AG04450 (cell line): ENCODE measurements at regions of chr4 and their contacts with region 1.

Region 1: GRCh38 chr4:40536032-40536431 is 93.6 kb downstream of the RBM47 start:
- DNase-seq: no peak
- H3K4me3 ChIP-seq: no peak overlapping the region
- H3K27ac ChIP-seq: no peak overlapping the region
- H3K27me3 ChIP-seq: no peaks in the 10 kb centered on the region
- CTCF ChIP-seq: no peak

Region 2: GRCh38 chr4:40003986-40004385 is 532.0 kb before region 1 on chr4:
- CTCF ChIA-PET with region 1: no interaction called
- POLR2A ChIA-PET with region 1: interaction called, 13 read pairs
- DNase-seq: peak; percentile 16
- H3K4me3 ChIP-seq: no peak overlapping the region
- H3K27ac ChIP-seq: no peak overlapping the region
- H3K27me3 ChIP-seq: no peaks in the 10 kb centered on the region
- CTCF ChIP-seq: no peak

Region 3: GRCh38 chr4:40340030-40340429 is 196.0 kb before region 1 on chr4:
- CTCF ChIA-PET with region 1: interaction called, 10 read pairs
- POLR2A ChIA-PET with region 1: no interaction called
- DNase-seq: no peak
- H3K4me3 ChIP-seq: no peak overlapping the region
- H3K27ac ChIP-seq: no peak overlapping the region
- H3K27me3 ChIP-seq: peaks cover 6% of the 10 kb centered on the region
- CTCF ChIP-seq: no peak

Region 4: GRCh38 chr4:41418444-41418843 is 882.4 kb after region 1 on chr4:
- CTCF ChIA-PET with region 1: no interaction called
- POLR2A ChIA-PET with region 1: no interaction called
- DNase-seq: no peak
- H3K4me3 ChIP-seq: no peak overlapping the region
- H3K27ac ChIP-seq: no peak overlapping the region
- H3K27me3 ChIP-seq: peaks cover 1% of the 10 kb centered on the region
- CTCF ChIP-seq: no peak